ENCODE measurements at regions of chr13 and their contacts with region 1.

Region 1: GRCh38 chr13:21060987-21061763 is at the start of gene LATS2:
- DNase-seq: peak; percentile 78 to 90
- H3K4me3 ChIP-seq: peak within 1 kb of the TSS; percentile 79
- H3K27ac ChIP-seq: peak within 1 kb of the TSS; percentile 49
- H3K4me1 ChIP-seq: 0 out of 2 replicates have a peak, but pooled peaks cover 13% of the 10 kb centered on the region
- H3K27me3 ChIP-seq: no peaks in the 10 kb centered on the region
- CTCF ChIP-seq: no peak
- total RNA-seq, gene LATS2: 12.3 and 15.2 TPM in 2 replicates

Region 2: GRCh38 chr13:21106089-21106488 is 44.9 kb after region 1 on chr13:
- CTCF ChIA-PET with region 1: no interaction called
- POLR2A ChIA-PET with region 1: no interaction called
- intact Hi-C with region 1: no loop called
- DNase-seq: no peak
- H3K4me3 ChIP-seq: no peak overlapping the region
- H3K27ac ChIP-seq: no peak overlapping the region
- H3K4me1 ChIP-seq: no peaks in the 10 kb centered on the region
- H3K27me3 ChIP-seq: no peaks in the 10 kb centered on the region
- CTCF ChIP-seq: no peak

Region 3: DNA sequence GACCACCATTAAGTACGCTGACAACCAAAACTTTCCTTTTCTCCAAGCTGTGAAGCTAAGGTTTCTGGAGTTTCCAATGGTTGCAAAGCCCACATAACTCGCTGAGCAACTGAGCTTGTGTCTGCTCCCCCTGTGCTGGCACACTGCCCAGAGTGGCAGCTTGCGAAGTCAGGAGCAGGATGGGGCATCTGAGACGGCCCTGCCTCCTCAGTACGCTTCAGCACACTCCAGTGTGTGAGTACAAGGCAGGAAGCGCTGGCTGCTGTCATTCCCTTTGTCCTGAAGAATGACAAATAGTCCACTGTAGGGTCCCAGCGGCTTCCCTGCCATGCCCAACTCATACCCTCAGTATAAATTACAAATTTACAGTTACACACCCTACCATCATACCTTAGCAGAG is 63.7 kb after region 1 on chr13:
- CTCF ChIA-PET with region 1: no interaction called
- POLR2A ChIA-PET with region 1: no interaction called
- intact Hi-C with region 1: loop called (anchors 10 kb)
- DNase-seq: peak; percentile 78 to 79
- H3K4me3 ChIP-seq: no peak overlapping the region
- H3K27ac ChIP-seq: no peak overlapping the region
- H3K4me1 ChIP-seq: 0 out of 2 replicates have a peak, but pooled peaks cover 6% of the 10 kb centered on the region
- H3K27me3 ChIP-seq: no peaks in the 10 kb centered on the region
- CTCF ChIP-seq: no peak

Region 4: GRCh38 chr13:21287331-21287907 is 226.2 kb after region 1 on chr13:
- CTCF ChIA-PET with region 1: no interaction called
- POLR2A ChIA-PET with region 1: interaction called, 10 read pairs
- intact Hi-C with region 1: no loop called
- DNase-seq: no peak
- H3K4me3 ChIP-seq: no peak overlapping the region
- H3K27ac ChIP-seq: no peak overlapping the region
- H3K4me1 ChIP-seq: no peaks in the 10 kb centered on the region
- H3K27me3 ChIP-seq: peaks cover 11% of the 10 kb centered on the region; the same call in 1 of the 2 replicates
- CTCF ChIP-seq: no peak